Endothelial cell of umbilical vein (primary cell): ENCODE measurements at regions of chr3 and their contacts with region 1.

Region 1: DNA sequence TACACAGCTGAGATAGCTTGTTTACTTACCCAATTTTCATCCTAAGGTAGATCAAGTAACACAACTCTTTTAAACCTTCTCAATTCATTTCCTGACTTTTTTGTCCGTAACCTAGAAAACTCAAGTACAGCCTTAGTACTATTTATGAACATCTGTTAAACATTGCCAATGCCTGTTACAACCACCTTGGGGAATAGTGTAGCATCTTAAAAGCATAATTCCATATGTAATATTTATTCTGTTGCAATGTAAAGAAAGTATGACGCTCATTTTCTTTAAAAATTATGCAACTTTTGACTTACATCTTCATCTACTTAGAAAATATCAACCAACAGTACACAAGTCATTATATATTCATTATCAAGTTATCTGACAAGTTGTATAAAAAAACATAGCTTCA is 54.6 kb downstream of the SUCLG2 start:
- DNase-seq: no peak
- H3K4me3 ChIP-seq: no peak overlapping the region
- H3K27ac ChIP-seq: no peak overlapping the region
- H3K4me1 ChIP-seq: no peaks in the 10 kb centered on the region
- H3K27me3 ChIP-seq: no peaks in the 10 kb centered on the region
- CTCF ChIP-seq: no peak
- POLR2A ChIP-seq: no peak

Region 2: GRCh38 chr3:67578416-67578815 is 21.4 kb before region 1 on chr3:
- CTCF ChIA-PET with region 1: no interaction called
- POLR2A ChIA-PET with region 1: no interaction called
- dilution Hi-C with region 1: no loop called
- intact Hi-C with region 1: loop called (anchors 2 kb)
- DNase-seq: peak; percentile 9
- H3K4me3 ChIP-seq: no peak overlapping the region
- H3K27ac ChIP-seq: no peak overlapping the region
- H3K4me1 ChIP-seq: peaks cover 7% of the 10 kb centered on the region
- H3K27me3 ChIP-seq: no peaks in the 10 kb centered on the region
- CTCF ChIP-seq: no peak
- POLR2A ChIP-seq: no peak

Region 3: DNA sequence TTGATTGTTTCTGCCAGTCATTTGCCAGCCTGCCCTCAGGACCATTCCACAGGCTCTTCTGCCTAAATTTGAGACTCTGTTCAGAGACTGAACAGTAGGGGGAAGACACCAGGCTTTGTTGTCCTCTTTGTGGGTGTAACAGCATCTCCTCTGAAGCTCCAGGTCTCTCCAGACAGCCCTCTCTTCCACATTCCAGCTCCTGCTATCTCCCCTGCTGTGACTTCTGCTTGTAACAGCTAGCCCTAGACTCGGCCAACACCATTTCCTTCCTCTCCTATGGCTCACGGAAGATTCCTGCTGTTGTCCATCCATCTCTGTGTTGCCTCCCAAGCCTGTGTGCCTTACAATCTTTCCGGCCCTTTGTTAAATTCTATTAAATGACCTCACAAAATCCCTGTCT is 14.4 kb after region 1 on chr3:
- CTCF ChIA-PET with region 1: no interaction called
- POLR2A ChIA-PET with region 1: no interaction called
- dilution Hi-C with region 1: no loop called
- intact Hi-C with region 1: no loop called
- DNase-seq: no peak
- H3K4me3 ChIP-seq: no peak overlapping the region
- H3K27ac ChIP-seq: no peak overlapping the region
- H3K4me1 ChIP-seq: peaks cover 20% of the 10 kb centered on the region
- H3K27me3 ChIP-seq: no peaks in the 10 kb centered on the region
- CTCF ChIP-seq: no peak
- POLR2A ChIP-seq: no peak